K562 (cell line): ENCODE measurements at regions of chr10 and their contacts with region 1.

Region 1: GRCh38 chr10:38094158-38094920 is at the start of gene ZNF37A:
- DNase-seq: peak; percentile 76 to 97 (median 79)
- ATAC-seq: peak; percentile 99
- H3K4me3 ChIP-seq: peak within 1 kb of the TSS; percentile 58
- H3K27ac ChIP-seq: peak within 1 kb of the TSS; percentile 71
- H3K4me1 ChIP-seq: peaks cover 3 to 11% of the 10 kb centered on the region in 2 experiments; a peak in 3 of 5 replicates
- H3K27me3 ChIP-seq: no peaks in the 10 kb centered on the region
- CTCF ChIP-seq: no peak
- EP300 ChIP-seq: no peak
- POLR2A ChIP-seq: peak; percentile 75
- RAD21 ChIP-seq: no peak
- polyA plus RNA-seq, gene ZNF37A: 4.1 to 5.0 TPM

Region 2: DNA sequence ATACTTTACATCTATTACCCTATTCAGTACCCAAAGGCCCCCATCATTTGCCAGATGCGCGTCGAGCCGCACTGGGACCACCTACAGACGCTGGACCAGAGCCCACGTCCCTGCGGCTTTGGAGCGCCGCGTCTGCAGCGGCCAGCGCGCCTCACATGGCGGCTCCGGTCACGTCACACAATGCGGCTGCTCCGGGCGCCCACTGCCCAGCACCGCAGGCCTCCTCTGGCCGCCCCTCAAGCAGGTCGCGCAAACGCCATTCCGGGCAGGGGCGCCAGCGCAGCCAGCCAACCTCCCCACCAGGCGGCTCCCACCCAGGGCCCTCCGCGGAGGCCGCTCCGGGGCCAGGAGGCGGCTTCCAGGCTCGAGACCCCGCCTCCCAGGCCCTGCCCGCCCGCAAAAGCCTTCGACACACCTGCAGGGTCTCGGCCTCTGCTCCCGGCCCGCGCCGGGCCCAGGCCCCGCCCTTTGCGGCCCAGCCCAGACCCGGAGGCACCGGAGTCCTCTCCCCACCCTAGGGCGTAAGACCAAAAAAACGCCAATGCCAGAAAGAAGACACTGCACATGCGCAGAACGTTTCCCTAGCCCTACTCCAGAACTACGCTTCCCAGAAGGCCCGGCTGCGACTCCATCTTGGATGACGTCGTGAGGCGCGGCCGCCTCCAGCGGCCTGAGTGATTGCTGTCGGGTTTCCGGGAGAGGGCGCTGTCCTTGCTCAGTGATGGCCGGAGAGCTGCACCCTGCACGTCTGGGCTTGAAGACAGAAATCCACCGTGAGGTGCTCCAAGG is 118.1 kb before region 1 on chr10 and contains the start of gene ZNF25:
- CTCF ChIA-PET with region 1: no interaction called
- POLR2A ChIA-PET with region 1: no interaction called
- in situ Hi-C with region 1: no loop called
- intact Hi-C with region 1: loop called (anchors 10 kb)
- DNase-seq: peak; percentile 95 to 98 (median 97)
- ATAC-seq: peak; percentile 99
- H3K4me3 ChIP-seq: peak within 1 kb of the TSS; percentile 76
- H3K27ac ChIP-seq: peak within 1 kb of the TSS; percentile 88
- H3K4me1 ChIP-seq: peaks cover 4 to 10% of the 10 kb centered on the region in 2 experiments; a peak in 3 of 5 replicates
- H3K27me3 ChIP-seq: no peaks in the 10 kb centered on the region
- CTCF ChIP-seq: peak; percentile 96
- EP300 ChIP-seq: no peak; the same call in 1 of the 2 replicates
- POLR2A ChIP-seq: peak; percentile 86
- RAD21 ChIP-seq: peak; percentile 45 to 70; a peak in 3 of 4 replicates
- polyA plus RNA-seq, gene ZNF25: 0.62 to 1.1 TPM

Region 3: DNA sequence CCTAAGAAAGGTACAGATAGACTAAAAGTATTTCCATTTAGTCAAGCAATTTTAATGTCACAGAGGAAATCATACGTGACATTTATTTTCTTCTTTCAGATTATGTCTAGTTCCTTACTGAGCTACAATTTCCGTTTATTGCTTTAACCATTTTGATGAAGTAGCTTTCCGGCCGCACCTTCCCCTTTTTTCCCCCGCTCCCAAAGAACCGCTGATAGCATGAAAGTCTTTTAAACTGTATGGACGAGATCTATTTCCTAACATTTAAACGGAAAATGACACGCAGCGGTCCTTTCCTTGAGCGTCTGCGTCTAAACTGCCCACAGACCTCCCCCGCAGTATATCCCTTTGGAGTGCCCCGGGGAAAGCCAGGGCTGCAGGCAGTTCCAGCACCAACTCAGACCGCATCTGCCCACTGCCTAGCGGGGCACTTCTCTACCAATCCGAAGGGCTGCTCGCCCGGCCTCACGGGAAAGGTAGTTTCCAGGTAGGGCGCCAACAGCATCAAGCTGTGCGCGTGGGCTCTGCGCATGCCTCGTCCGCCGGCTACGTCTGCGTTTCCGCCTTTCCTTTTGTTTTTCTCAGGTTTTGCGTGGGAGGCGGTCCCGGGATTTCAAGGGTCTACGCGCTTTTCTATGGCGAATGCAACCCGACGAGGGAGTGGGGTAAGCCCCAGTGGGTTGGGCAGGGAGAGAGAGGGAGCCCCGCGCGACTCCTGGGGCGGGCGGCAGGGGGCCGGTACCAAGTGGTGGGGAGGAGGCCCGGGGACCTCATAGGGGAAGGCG is 84.0 kb before region 1 on chr10 and contains the start of gene ZNF33A:
- CTCF ChIA-PET with region 1: no interaction called
- POLR2A ChIA-PET with region 1: no interaction called
- in situ Hi-C with region 1: no loop called
- intact Hi-C with region 1: loop called (anchors 2 kb)
- DNase-seq: peak; percentile 77 to 93 (median 81)
- ATAC-seq: peak; percentile 90
- H3K4me3 ChIP-seq: peak within 1 kb of the TSS; percentile 67
- H3K27ac ChIP-seq: peak within 1 kb of the TSS; percentile 96
- H3K4me1 ChIP-seq: peaks cover 4 to 5% of the 10 kb centered on the region in 2 experiments; a peak in 2 of 5 replicates
- H3K27me3 ChIP-seq: no peaks in the 10 kb centered on the region
- CTCF ChIP-seq: no peak; a peak in 1 of 6 replicates
- EP300 ChIP-seq: no peak
- POLR2A ChIP-seq: no peak; the same call in none of the 2 replicates
- RAD21 ChIP-seq: no peak
- polyA plus RNA-seq, gene ZNF33A: 12.7 TPM